ENCODE measurements at regions of chr2 and their contacts with region 1.

Region 1: DNA sequence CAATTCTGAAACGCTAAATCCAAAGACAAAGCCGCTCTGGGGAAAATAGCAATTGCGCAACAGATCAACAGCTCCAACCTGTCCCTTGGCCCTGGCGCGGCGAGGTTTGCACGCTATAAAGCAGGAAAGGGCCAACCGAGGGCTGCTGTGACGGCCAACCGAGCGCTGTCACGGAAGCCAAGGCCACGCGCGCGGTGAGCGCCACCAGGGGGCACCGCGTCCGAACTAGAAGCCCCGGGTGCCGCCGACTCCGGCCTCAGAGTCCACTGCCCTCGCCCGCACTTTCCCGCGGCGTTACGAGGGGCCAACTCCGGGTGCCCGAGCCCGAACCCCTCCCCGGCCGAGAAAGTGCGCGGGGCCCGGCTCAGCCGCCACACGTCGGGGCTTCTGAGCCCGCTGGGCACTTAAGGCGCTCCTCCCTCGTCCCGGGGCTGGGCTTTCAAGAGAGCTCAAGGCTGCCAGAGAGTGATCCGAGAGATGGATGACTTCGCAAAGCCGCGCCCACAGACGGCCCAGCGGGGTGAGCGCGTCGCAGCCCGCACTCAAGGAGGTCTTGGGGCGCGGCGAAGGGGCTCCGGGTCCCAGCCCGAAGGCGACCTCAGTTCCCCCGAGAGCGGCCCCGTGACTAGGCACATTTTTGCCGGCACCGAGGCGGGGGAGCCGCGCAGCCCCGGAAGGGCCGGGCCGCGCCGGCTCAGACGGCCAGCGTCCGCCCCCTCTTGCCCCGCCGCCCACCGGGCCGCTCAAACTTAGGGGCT is 897 bp downstream of the NFE2L2 start:
- DNase-seq: peak; percentile 69 to 99
- ATAC-seq: peak; percentile 65 to 72
- H3K4me3 ChIP-seq: peak overlapping the region; percentile 92
- H3K27ac ChIP-seq: peak overlapping the region; percentile 99 to 100
- H3K4me1 ChIP-seq: peaks cover 39% of the 10 kb centered on the region
- CTCF ChIP-seq: peak; percentile 80
- EP300 ChIP-seq: peak; percentile 72 to 85; a peak in 3 of 5 replicates
- POLR2A ChIP-seq: peak; percentile 24
- RAD21 ChIP-seq: peak; percentile 63 to 85

Region 2: GRCh38 chr2:177212106-177212890 is 51.3 kb before region 1 on chr2 and contains the start of gene HNRNPA3:
- CTCF ChIA-PET with region 1: no interaction called
- POLR2A ChIA-PET with region 1: interaction called, 18 read pairs
- DNase-seq: peak; percentile 94 to 99
- ATAC-seq: peak; percentile 94 to 97
- H3K4me3 ChIP-seq: peak within 1 kb of the TSS; percentile 91
- H3K27ac ChIP-seq: peak within 1 kb of the TSS; percentile 99 to 100
- H3K4me1 ChIP-seq: peaks cover 35% of the 10 kb centered on the region
- CTCF ChIP-seq: peak; percentile 19; the same call in 1 of the 3 replicates
- EP300 ChIP-seq: no peak
- POLR2A ChIP-seq: peak; percentile 60
- RAD21 ChIP-seq: no peak; a peak in 1 of 5 replicates
- polyA plus RNA-seq, gene HNRNPA3: 250 and 357 TPM in 2 replicates

Region 3: GRCh38 chr2:177239932-177240630 is 23.5 kb before region 1 on chr2:
- CTCF ChIA-PET with region 1: interaction called, 11 read pairs
- POLR2A ChIA-PET with region 1: interaction called, 25 read pairs
- DNase-seq: peak in 1 of 2 experiments; percentile 70
- ATAC-seq: peak; percentile 37 to 49; a peak in 5 of 6 replicates
- H3K4me3 ChIP-seq: no peak overlapping the region
- H3K27ac ChIP-seq: peak overlapping the region; percentile 84 to 86
- H3K4me1 ChIP-seq: peaks cover 81% of the 10 kb centered on the region
- CTCF ChIP-seq: no peak
- EP300 ChIP-seq: no peak
- POLR2A ChIP-seq: no peak
- RAD21 ChIP-seq: no peak

Region 4: GRCh38 chr2:177281400-177282180 is 18.0 kb after region 1 on chr2:
- CTCF ChIA-PET with region 1: interaction called, 37 read pairs
- POLR2A ChIA-PET with region 1: interaction called, 4 read pairs
- DNase-seq: no peak
- ATAC-seq: peak in 1 of 2 experiments; percentile 28; a peak in 2 of 6 replicates
- H3K4me3 ChIP-seq: no peak overlapping the region
- H3K27ac ChIP-seq: peak overlapping the region in 1 of 2 experiments; percentile 50; a peak in 2 of 6 replicates
- H3K4me1 ChIP-seq: peaks cover 12% of the 10 kb centered on the region; the same call in 2 of the 3 replicates
- CTCF ChIP-seq: no peak
- EP300 ChIP-seq: no peak
- POLR2A ChIP-seq: no peak
- RAD21 ChIP-seq: no peak

Region 5: DNA sequence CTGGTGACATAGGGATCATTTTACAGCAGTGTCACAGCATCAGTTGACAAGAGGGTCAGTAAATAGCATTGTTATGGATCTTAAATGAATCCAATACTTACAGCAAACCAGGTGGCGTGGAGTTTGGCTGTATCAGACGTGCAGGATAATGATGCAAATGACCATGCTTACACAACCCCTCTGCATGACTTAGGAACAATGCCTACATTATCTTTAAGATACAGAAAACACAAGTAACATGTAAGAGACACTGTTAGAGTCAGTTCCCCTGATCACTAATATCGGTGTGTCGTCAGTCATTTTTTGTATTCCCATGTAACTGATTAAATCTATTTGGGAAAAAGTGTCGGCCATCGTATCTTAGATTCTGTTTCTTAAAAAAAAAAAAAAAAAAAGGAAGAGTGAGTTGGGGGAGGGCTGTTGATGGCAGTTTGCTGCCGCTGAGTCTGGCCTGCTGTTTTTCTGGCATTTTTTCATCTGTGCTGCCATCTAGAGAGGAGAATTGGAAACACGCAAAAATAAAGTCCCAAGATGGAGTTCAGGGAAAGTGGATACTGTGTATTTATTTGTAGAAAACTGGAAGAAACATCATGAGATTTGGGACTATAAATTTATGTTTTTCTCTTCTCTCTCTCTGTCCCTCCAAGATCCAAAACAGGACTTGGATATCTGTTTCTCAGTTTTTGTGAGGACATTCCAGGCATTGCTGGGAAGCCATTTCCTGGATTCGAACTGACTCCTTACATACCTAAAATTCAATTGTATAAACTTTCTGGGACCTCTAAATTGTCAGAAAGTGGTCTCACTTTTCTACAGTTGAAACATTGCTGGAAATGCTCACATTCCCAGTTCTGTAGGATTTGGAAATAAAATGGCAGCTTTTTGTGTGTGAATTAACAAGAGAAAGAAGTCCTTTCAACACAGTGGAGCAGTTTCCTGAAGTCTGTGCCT is 68.7 kb after region 1 on chr2:
- CTCF ChIA-PET with region 1: interaction called, 41 read pairs
- POLR2A ChIA-PET with region 1: interaction called, 4 read pairs
- DNase-seq: peak; percentile 32 to 69
- ATAC-seq: peak; percentile 86 to 91
- H3K4me3 ChIP-seq: no peak overlapping the region
- H3K27ac ChIP-seq: peak overlapping the region; percentile 10 to 69; a peak in 3 of 6 replicates
- H3K4me1 ChIP-seq: peaks cover 12% of the 10 kb centered on the region; the same call in 2 of the 3 replicates
- CTCF ChIP-seq: peak; percentile 83
- EP300 ChIP-seq: no peak
- POLR2A ChIP-seq: no peak
- RAD21 ChIP-seq: peak; percentile 86 to 90

Region 6: DNA sequence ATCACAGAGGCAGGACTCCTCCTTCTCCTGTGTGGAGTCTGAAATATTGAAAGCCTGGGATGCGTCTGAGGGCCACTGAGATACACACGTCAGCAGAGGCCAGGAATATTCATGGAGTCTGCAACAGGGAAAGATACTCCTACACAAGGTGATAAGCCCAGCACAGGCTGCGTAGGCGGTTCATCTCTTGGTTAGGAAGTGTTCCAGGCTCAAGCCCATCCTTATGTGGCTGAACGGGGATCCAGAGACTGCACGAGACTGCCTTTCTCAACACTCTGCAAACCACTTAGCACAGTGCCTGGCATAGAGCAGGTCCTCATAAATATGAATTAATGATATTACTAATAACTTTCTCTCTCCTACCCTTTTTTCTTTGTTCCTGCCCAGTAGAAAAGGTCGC is 99.7 kb after region 1 on chr2:
- CTCF ChIA-PET with region 1: no interaction called
- POLR2A ChIA-PET with region 1: no interaction called
- DNase-seq: no peak
- ATAC-seq: no peak
- H3K4me3 ChIP-seq: no peak overlapping the region
- H3K27ac ChIP-seq: no peak overlapping the region
- H3K4me1 ChIP-seq: no peaks in the 10 kb centered on the region
- CTCF ChIP-seq: no peak
- EP300 ChIP-seq: no peak
- POLR2A ChIP-seq: no peak
- RAD21 ChIP-seq: no peak

Region 7: DNA sequence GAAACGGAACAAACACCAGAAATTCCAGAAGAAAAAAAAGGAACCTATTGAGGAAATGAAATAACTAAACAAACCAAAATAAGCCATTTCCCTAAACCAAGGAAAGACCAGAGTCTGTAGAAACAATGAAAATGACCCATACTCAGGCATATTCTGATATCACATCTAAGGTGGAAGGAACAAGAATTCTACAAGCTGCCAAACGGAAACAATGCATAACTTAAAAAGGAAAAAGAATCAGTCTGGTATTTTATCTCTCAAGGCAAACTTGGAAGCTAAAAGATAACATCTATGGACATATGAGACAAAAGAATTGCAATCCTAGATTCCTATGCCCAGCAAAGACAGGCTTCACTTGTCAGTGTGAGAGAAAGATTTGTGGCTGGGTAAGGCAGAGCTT is 482.7 kb after region 1 on chr2:
- CTCF ChIA-PET with region 1: no interaction called
- POLR2A ChIA-PET with region 1: no interaction called
- DNase-seq: no peak
- ATAC-seq: no peak
- H3K4me3 ChIP-seq: no peak overlapping the region
- H3K27ac ChIP-seq: no peak overlapping the region
- H3K4me1 ChIP-seq: no peaks in the 10 kb centered on the region
- CTCF ChIP-seq: no peak
- EP300 ChIP-seq: no peak
- POLR2A ChIP-seq: no peak
- RAD21 ChIP-seq: no peak

Measured in A549 (cell line).